ENCODE measurements at regions of chr17 and their contacts with region 1.

Region 1: GRCh38 chr17:68291844-68292695 is 775 bp downstream of the ARSG start:
- DNase-seq: peak; percentile 90
- H3K4me3 Mint-ChIP-seq: peak overlapping the region; percentile 83
- H3K27ac Mint-ChIP-seq: peak overlapping the region; percentile 84
- H3K4me1 Mint-ChIP-seq: peaks cover 67% of the 10 kb centered on the region
- H3K27me3 Mint-ChIP-seq: peaks cover 8% of the 10 kb centered on the region

Region 2: DNA sequence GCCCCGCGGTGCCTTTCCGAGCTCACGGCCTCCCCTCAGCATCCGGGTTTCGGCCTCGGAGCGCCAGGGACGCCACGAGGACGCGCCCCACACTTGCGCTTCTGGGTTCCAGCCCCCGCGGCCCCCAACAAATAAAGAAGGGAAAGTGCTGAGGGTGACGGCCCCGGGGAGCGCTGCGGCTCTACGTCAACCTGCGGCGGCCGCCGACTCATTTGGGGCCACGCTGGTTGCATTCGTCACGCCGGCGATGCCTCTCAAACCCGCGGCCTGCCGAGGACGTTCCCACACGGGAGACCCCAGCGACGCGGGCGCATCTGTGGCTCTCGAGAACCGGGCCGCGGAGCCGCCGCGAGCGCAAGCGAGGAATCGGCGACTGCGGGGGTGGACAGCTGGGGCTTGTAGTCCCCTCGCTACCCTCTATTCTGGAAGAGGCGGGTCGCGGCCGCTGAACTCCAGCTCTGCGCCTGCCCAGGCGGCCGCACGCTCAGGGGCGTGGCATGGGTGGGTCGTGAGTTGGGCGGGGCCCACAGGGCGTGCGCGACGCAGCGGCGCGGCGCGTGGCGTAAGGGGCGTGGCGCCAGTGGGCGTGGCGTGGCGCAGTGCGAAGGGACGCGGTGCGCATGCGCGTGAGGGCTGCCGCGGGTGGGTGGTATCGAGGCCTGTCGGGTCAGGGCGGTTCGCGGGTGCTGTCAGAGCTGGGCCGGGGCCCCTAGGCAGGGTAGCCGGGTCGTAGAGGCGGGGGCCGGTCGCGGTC is 44.4 kb before region 1 on chr17 and contains the start of gene AMZ2:
- intact Hi-C with region 1: loop called (anchors 2 kb)
- DNase-seq: peak; percentile 98
- H3K4me3 Mint-ChIP-seq: peak within 1 kb of the TSS; percentile 88
- H3K27ac Mint-ChIP-seq: peak within 1 kb of the TSS; percentile 96
- H3K4me1 Mint-ChIP-seq: peaks cover 49% of the 10 kb centered on the region
- H3K27me3 Mint-ChIP-seq: no peaks in the 10 kb centered on the region
- total RNA-seq, gene AMZ2: 67.3 and 75.7 TPM in 2 replicates

Region 3: DNA sequence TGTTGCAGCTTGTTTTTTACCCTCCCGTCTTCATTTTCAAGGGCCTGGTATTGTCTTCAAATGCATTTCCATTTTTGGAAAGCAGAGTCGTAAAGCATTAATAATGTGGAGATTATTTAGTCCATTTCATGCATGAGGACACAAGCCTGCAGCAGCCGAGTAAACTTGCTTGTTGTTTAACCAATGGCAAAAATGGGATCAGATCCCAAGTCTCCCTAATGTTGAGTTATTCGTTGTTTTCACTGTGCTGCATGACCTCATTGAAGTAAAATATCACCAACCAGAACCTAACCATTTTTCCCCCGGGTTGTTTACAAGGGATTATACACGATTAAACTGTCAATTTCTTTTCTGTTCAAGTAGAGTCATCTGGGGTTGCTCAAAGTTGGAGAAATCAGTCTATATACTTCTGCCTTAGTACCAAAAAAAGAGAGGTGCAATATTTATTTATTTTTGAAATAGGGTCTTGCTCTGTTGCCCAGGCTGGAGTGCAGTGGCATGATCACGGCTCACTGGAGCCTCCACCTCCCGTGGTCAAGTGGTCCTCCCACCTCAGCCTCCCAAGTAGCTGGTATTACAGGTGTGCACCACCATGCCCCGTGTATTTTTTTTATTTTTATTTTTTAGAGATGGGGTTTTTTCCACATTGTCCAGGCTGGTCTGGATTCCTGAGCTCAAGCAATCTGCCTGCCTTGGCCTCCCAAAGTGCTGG is 31.9 kb before region 1 on chr17:
- intact Hi-C with region 1: loop called (anchors 2 kb)
- DNase-seq: no peak
- H3K4me3 Mint-ChIP-seq: peak overlapping the region; percentile 80
- H3K27ac Mint-ChIP-seq: no peak overlapping the region
- H3K4me1 Mint-ChIP-seq: peaks cover 58% of the 10 kb centered on the region
- H3K27me3 Mint-ChIP-seq: no peaks in the 10 kb centered on the region

Region 4: GRCh38 chr17:68310152-68310551 is 18.1 kb after region 1 on chr17:
- intact Hi-C with region 1: loop called (anchors 1 kb)
- DNase-seq: peak; percentile 20
- H3K4me3 Mint-ChIP-seq: no peak overlapping the region
- H3K27ac Mint-ChIP-seq: no peak overlapping the region
- H3K4me1 Mint-ChIP-seq: peaks cover 32% of the 10 kb centered on the region
- H3K27me3 Mint-ChIP-seq: no peaks in the 10 kb centered on the region

Region 5: GRCh38 chr17:68356520-68356919 is 64.5 kb after region 1 on chr17:
- intact Hi-C with region 1: loop called (anchors 1 kb)
- DNase-seq: peak; percentile 75
- H3K4me3 Mint-ChIP-seq: peak overlapping the region; percentile 73
- H3K27ac Mint-ChIP-seq: peak overlapping the region; percentile 86
- H3K4me1 Mint-ChIP-seq: peaks cover 61% of the 10 kb centered on the region
- H3K27me3 Mint-ChIP-seq: no peaks in the 10 kb centered on the region

Region 6: GRCh38 chr17:68377862-68378770 is 86.0 kb after region 1 on chr17:
- intact Hi-C with region 1: no loop called
- DNase-seq: no peak
- H3K4me3 Mint-ChIP-seq: no peak overlapping the region
- H3K27ac Mint-ChIP-seq: no peak overlapping the region
- H3K4me1 Mint-ChIP-seq: peaks cover 11% of the 10 kb centered on the region
- H3K27me3 Mint-ChIP-seq: peaks cover 15% of the 10 kb centered on the region

Region 7: GRCh38 chr17:68398691-68399637 is 106.9 kb after region 1 on chr17:
- intact Hi-C with region 1: loop called (anchors 1 kb)
- DNase-seq: peak; percentile 9
- H3K4me3 Mint-ChIP-seq: peak overlapping the region; percentile 49
- H3K27ac Mint-ChIP-seq: peak overlapping the region; percentile 85
- H3K4me1 Mint-ChIP-seq: peaks cover 51% of the 10 kb centered on the region
- H3K27me3 Mint-ChIP-seq: no peaks in the 10 kb centered on the region

Region 8: DNA sequence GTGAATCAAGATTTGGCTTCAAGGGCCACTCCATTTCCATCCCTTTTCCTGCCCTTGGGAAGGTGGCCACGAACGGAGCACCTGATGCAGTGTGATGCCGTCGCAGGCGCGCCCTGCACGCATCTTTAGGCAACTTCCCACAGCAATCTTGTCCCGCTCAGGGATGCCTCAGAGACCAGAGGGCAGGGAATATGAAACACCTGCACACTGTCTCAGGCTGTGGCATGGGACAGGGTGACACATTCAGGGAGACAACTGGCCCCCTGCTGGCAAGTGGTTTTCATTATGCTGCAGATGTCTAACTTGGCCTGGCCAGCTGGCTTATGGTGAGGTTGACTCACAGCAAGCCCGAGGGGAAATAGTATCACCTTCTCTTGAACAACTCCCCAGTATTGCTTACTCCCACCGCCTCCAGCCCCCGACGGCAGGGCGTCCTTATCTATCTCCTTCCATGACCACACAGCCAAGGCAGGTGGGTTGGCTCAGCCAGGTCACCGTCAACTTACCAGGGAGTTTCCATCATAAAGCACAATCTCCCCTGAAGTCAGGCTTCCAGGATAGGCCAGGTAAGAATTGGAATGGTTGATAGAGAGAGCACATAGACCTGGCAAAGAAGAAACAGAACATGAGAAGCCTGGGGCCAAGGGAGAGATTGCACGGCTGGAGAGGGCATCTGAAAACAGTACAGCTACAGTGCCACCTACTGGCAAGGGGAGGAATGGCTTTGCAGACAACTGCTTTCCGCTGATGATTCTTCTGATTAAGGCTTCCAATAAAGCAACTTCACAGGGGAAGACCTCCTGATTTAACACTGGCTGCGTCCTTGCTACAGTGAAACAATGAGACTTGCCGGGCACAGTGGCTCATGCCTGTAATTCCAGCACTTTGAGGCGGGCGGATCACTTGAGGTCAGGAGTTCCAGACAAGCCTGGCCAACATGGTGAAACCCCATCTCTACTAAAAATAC is 144.1 kb after region 1 on chr17:
- intact Hi-C with region 1: loop called (anchors 1 kb)
- DNase-seq: peak; percentile 77
- H3K4me3 Mint-ChIP-seq: peak overlapping the region; percentile 64
- H3K27ac Mint-ChIP-seq: peak overlapping the region; percentile 91
- H3K4me1 Mint-ChIP-seq: peaks cover 64% of the 10 kb centered on the region
- H3K27me3 Mint-ChIP-seq: no peaks in the 10 kb centered on the region

Region 9: DNA sequence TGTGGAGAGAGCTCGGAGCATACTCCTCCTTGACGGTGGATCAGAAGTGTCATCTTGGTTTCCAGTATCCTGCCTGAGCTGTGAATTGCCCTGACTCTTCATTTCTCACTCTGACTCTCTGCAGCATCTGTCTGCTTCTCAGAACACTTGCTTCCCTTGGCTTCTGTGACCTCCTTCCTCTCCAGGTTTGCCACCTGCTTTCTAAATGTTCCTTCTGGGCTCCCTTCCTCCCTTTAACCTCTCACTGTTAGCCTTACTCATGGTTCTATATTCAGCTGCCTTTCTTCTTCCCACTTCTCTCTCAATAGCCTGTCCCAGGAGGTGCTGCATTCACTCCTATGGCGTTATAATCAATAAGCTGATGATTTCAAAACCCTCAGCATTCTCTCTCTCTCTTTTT is 209.0 kb after region 1 on chr17:
- intact Hi-C with region 1: no loop called
- DNase-seq: no peak
- H3K4me3 Mint-ChIP-seq: no peak overlapping the region
- H3K27ac Mint-ChIP-seq: peak overlapping the region; percentile 13
- H3K4me1 Mint-ChIP-seq: peaks cover 35% of the 10 kb centered on the region
- H3K27me3 Mint-ChIP-seq: no peaks in the 10 kb centered on the region

Measured in activated T-helper 1 cell treated with anti-CD3 and anti-CD28 coated beads, Interleukin-12 subunit alpha, Interleukin-12 subunit beta, Interleukin-2, Interleukin-4 antibody, amounts not matched to agents 30 ng/mL and 10 ng/mL and 1 ng/mL, durations not matched to agents 14 hours and 24 hours and 36 hours (primary cell).